Common myeloid progenitor, CD34-positive (primary cell): ENCODE measurements at regions of chr4 and their contacts with region 1.

Region 1: GRCh38 chr4:5824635-5825034 is 68.3 kb downstream of the CRMP1 start:
- DNase-seq: peak; percentile 40 to 58 (median 54)
- H3K4me3 ChIP-seq: no peak overlapping the region
- H3K27ac ChIP-seq: no peak overlapping the region
- H3K4me1 ChIP-seq: peaks cover 0 to 62% (median 23%) of the 10 kb centered on the region in 4 experiments
- H3K27me3 ChIP-seq: peaks cover 0 to 10% (median 1%) of the 10 kb centered on the region in 5 experiments

Region 2: DNA sequence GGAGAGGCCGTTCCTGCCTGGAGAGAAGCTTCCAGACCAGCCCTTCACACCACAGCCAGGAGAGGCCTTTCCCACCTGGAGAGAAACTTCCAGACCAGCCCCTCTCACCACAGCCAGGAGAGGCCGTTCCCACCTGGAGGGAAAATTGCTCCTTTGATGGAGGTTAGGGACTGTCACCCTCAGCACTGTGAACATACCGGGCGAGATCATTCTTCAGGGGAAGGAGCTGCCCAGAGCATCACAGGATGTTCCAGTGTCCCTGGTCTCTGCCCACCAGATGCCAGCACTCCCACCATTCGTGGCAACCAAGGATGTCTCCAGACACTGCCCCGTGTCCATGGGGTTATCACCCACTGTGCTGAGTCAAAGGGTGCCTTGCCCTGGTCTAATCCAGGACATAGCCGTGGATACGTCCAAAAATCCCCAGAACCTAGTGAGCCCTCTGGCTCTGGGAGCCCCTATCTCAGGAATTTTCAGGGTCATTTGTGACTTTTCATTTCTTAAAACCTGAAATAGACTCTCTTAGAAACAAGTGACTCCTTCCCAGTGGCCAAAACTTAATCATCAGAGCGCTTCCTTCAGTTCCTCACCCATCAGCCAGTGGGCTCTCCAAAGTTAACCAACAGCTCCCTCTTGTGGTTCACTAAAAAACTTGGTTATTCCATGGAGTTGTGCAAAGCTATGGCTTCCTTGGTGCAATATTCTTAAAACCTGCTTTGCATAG is 12.0 kb before region 1 on chr4:
- CTCF ChIA-PET with region 1: interaction called, 18 read pairs
- POLR2A ChIA-PET with region 1: no interaction called
- DNase-seq: peak; percentile 77 to 88 (median 83)
- H3K4me3 ChIP-seq: no peak overlapping the region
- H3K27ac ChIP-seq: no peak overlapping the region
- H3K4me1 ChIP-seq: no peaks in the 10 kb centered on the region
- H3K27me3 ChIP-seq: no peaks in the 10 kb centered on the region